ENCODE measurements at regions of chr11 and their contacts with region 1.

Region 1: GRCh38 chr11:83249972-83250593 is 36.1 kb downstream of the CCDC90B start:
- DNase-seq: peak; percentile 53
- H3K4me3 Mint-ChIP-seq: no peak overlapping the region
- H3K27ac Mint-ChIP-seq: no peak overlapping the region
- H3K4me1 Mint-ChIP-seq: no peaks in the 10 kb centered on the region
- H3K27me3 Mint-ChIP-seq: no peaks in the 10 kb centered on the region
- CTCF ChIP-seq: peak; percentile 53

Region 2: DNA sequence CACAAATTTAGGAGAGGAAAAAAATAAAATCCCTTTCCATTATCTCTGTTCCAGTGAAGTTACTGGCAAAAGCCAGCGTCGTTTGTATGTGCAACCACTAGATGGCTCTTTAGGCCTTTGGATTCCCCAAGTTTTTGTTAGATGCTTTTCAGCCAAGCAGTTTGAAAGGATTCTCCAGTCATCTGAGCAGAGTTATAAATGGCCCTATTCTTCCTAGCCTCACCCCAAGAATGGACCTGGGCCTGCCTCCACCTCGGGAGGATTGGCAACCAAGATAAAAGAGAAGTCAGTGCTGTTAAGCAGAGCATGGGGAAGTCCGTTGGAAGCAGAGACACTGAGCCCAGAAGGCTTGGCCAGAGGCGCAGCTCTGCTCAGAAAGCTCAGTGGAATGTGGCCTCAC is 531.8 kb before region 1 on chr11:
- CTCF ChIA-PET with region 1: interaction called, 17 read pairs
- POLR2A ChIA-PET with region 1: no interaction called
- intact Hi-C with region 1: loop called (anchors 1 kb)
- DNase-seq: peak; percentile 58
- H3K4me3 Mint-ChIP-seq: no peak overlapping the region
- H3K27ac Mint-ChIP-seq: no peak overlapping the region
- H3K4me1 Mint-ChIP-seq: no peaks in the 10 kb centered on the region
- H3K27me3 Mint-ChIP-seq: no peaks in the 10 kb centered on the region
- CTCF ChIP-seq: peak; percentile 60

Region 3: DNA sequence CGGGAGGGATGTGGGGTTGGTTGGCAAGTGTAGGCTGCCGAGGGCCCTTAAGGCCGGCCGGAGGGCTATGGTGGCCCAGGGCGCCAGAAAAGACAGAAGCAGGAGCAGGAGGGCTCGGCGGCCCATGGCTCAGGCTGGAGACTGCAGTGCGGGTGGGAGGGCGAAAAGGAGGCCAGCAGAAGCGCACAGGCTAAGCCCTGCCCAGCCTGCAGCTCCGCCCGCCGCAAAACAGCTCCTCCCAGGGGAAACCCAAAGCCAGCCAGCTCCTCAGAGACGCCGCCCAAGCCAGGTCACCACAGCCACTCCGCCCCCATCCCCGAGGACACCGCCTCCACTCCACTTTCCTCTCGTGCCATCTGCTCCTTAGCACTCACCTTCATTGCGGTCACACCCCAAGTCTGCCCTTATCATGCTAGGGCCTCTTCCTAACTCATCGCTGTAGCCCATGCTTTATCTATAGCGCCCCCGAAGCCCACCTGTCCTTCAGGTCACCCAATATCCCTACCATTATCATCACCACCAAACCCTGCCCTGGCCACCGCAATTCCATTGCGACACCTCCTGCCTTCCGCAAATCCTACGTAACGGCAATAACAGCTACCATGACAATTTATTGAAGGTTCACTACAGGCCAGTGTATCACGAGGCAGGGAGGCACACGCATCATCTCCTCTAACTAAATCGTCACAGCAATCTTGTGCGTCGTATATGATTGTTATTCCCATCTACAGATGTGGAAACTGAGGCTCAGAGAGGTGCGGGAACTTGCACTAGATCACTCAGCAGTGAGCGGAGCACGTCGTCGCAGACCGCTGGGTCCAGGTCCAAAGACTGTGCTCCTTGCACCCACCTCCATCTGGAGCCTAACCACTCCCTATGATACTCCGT is 349.6 kb before region 1 on chr11 and contains the start of gene PRCP:
- CTCF ChIA-PET with region 1: interaction called, 57 read pairs
- POLR2A ChIA-PET with region 1: interaction called, 8 read pairs
- intact Hi-C with region 1: no loop called
- DNase-seq: peak; percentile 91
- H3K4me3 Mint-ChIP-seq: peak within 1 kb of the TSS; percentile 88
- H3K27ac Mint-ChIP-seq: peak within 1 kb of the TSS; percentile 95
- H3K4me1 Mint-ChIP-seq: peaks cover 38% of the 10 kb centered on the region
- H3K27me3 Mint-ChIP-seq: no peaks in the 10 kb centered on the region
- CTCF ChIP-seq: no peak
- total RNA-seq, gene PRCP: 17.3 and 22.7 TPM in 2 replicates

Region 4: GRCh38 chr11:83087035-83087434 is 163.0 kb before region 1 on chr11:
- CTCF ChIA-PET with region 1: interaction called, 10 read pairs
- POLR2A ChIA-PET with region 1: no interaction called
- intact Hi-C with region 1: no loop called
- DNase-seq: peak; percentile 28
- H3K4me3 Mint-ChIP-seq: no peak overlapping the region
- H3K27ac Mint-ChIP-seq: no peak overlapping the region
- H3K4me1 Mint-ChIP-seq: peaks cover 9% of the 10 kb centered on the region
- H3K27me3 Mint-ChIP-seq: no peaks in the 10 kb centered on the region
- CTCF ChIP-seq: no peak

Region 5: GRCh38 chr11:83105168-83105567 is 144.9 kb before region 1 on chr11:
- CTCF ChIA-PET with region 1: no interaction called
- POLR2A ChIA-PET with region 1: no interaction called
- intact Hi-C with region 1: no loop called
- DNase-seq: no peak
- H3K4me3 Mint-ChIP-seq: no peak overlapping the region
- H3K27ac Mint-ChIP-seq: no peak overlapping the region
- H3K4me1 Mint-ChIP-seq: no peaks in the 10 kb centered on the region
- H3K27me3 Mint-ChIP-seq: peaks cover 13% of the 10 kb centered on the region
- CTCF ChIP-seq: no peak

Region 6: DNA sequence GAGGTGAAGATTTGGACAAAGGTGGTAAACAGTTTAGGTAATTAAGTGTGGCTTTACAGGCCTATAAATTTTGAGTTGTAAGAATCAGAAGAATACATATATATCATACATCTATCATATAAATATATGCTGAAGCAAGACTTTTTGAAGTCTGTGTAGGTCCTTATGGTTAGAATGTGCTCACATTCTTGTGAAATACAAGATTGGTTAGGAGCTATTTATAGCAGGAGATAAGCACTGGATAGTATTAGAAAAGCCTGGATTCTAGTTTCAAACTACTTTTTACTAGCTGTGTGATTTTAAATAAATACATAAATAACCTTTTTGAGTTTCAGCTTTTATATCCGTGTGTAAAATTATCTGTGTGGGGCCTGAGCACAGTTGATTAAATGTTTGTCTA is 14.3 kb before region 1 on chr11:
- CTCF ChIA-PET with region 1: interaction called, 39 read pairs
- POLR2A ChIA-PET with region 1: no interaction called
- intact Hi-C with region 1: no loop called
- DNase-seq: no peak
- H3K4me3 Mint-ChIP-seq: no peak overlapping the region
- H3K27ac Mint-ChIP-seq: no peak overlapping the region
- H3K4me1 Mint-ChIP-seq: no peaks in the 10 kb centered on the region
- H3K27me3 Mint-ChIP-seq: no peaks in the 10 kb centered on the region
- CTCF ChIP-seq: no peak

Region 7: GRCh38 chr11:83278351-83278750 is 28.3 kb after region 1 on chr11:
- CTCF ChIA-PET with region 1: interaction called, 11 read pairs
- POLR2A ChIA-PET with region 1: no interaction called
- intact Hi-C with region 1: no loop called
- DNase-seq: no peak
- H3K4me3 Mint-ChIP-seq: no peak overlapping the region
- H3K27ac Mint-ChIP-seq: no peak overlapping the region
- H3K4me1 Mint-ChIP-seq: peaks cover 18% of the 10 kb centered on the region
- H3K27me3 Mint-ChIP-seq: no peaks in the 10 kb centered on the region
- CTCF ChIP-seq: no peak

Region 8: GRCh38 chr11:83819933-83820549 is 570.0 kb after region 1 on chr11:
- CTCF ChIA-PET with region 1: interaction called, 25 read pairs
- POLR2A ChIA-PET with region 1: no interaction called
- intact Hi-C with region 1: no loop called
- DNase-seq: peak; percentile 68
- H3K4me3 Mint-ChIP-seq: no peak overlapping the region
- H3K27ac Mint-ChIP-seq: no peak overlapping the region
- H3K4me1 Mint-ChIP-seq: no peaks in the 10 kb centered on the region
- H3K27me3 Mint-ChIP-seq: peaks cover 27% of the 10 kb centered on the region
- CTCF ChIP-seq: peak; percentile 58

Region 9: GRCh38 chr11:84437071-84437980 is 1187.2 kb after region 1 on chr11:
- CTCF ChIA-PET with region 1: no interaction called
- POLR2A ChIA-PET with region 1: no interaction called
- intact Hi-C with region 1: no loop called
- DNase-seq: peak; percentile 1
- H3K4me3 Mint-ChIP-seq: no peak overlapping the region
- H3K27ac Mint-ChIP-seq: no peak overlapping the region
- H3K4me1 Mint-ChIP-seq: no peaks in the 10 kb centered on the region
- H3K27me3 Mint-ChIP-seq: peaks cover 40% of the 10 kb centered on the region
- CTCF ChIP-seq: no peak